ENCODE measurements at regions of chr17 and their contacts with region 1.

Region 1: DNA sequence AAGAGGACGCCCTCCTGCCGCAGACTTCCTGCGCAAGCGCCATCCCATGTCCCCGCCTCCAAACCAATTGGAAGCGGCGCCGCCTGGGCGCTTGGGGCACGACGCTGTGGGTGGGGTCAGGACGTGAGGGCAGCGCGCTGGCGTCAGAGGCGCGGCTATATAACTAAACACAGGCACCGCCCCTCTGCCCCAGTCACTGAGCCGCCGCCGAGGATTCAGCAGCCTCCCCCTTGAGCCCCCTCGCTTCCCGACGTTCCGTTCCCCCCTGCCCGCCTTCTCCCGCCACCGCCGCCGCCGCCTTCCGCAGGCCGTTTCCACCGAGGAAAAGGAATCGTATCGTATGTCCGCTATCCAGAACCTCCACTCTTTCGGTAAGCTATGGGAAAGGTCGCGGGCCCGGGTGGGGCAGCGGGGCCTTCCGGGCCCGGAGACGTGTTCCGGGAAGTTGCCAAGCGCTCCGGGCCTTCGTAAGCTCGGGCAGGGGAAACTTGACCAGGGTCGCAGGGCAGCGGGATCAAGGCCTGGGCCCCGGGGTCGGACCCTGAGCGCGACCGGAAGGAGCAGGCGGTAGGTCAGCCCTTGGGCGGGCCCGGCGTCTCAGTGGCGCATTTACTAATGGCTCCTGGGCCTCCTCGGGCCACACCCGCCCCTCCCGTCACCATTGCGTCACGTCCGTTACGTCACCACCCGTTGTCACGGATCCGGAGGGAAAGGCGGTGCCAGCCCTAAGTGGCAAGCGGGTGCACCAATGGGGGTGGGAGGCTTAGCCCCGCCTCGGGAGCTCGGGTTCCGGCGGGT is at the start of gene EIF1:
- DNase-seq: peak; percentile 100
- ATAC-seq: peak; percentile 81
- H3K4me3 Mint-ChIP-seq: peak within 1 kb of the TSS; percentile 97
- H3K27ac Mint-ChIP-seq: peak within 1 kb of the TSS; percentile 95
- H3K4me1 Mint-ChIP-seq: peaks cover 20% of the 10 kb centered on the region
- H3K27me3 Mint-ChIP-seq: no peaks in the 10 kb centered on the region
- total RNA-seq, gene EIF1: 869 to 977 TPM

Region 2: DNA sequence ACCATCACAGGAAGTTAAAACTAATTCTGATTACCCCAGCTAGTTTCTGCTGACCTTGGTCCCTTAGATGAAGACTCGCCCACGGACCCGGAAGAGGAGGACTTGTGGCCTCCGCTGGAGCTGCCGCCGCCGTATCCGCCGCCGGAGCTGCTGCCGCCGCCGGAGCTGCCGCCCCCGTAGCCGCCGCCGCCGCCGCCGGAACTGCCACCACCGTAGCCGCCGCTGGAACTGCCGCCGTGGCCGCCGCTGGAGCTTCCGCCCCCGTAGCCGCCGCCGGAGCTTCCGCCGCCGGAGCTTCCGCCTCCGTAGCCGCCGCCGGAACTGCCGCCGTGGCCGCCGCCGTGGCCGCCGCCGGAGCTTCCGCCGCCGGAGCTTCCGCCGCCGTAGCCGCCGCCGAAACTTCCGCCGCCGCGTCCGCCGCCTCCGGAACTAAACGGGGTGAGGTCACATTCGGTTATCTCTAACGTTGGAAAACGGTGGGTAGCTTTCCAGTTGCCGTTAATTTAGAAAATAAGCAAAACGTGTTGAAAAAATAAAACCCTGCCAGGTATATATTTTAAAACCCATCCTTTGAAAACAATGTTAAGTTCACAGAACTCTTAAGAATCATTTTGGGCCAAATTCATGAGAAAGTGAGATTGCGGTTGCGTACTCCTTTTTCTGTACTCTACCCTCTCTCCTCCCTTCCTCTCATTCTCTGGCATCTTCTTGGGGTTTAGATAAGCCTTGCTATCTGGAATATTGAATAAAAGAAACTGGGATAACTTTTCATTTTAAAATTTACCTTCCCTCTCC is 870.0 kb before region 1 on chr17:
- CTCF ChIA-PET with region 1: no interaction called
- POLR2A ChIA-PET with region 1: interaction called, 7 read pairs
- intact Hi-C with region 1: loop called in 1 of 2 experiments (anchors 2 kb)
- DNase-seq: peak; percentile 91
- ATAC-seq: peak; percentile 84
- H3K4me3 Mint-ChIP-seq: peak overlapping the region; percentile 95
- H3K27ac Mint-ChIP-seq: peak overlapping the region; percentile 97
- H3K4me1 Mint-ChIP-seq: peaks cover 25% of the 10 kb centered on the region
- H3K27me3 Mint-ChIP-seq: peaks cover 1% of the 10 kb centered on the region

Region 3: GRCh38 chr17:41360296-41360995 is 328.5 kb before region 1 on chr17:
- CTCF ChIA-PET with region 1: no interaction called
- POLR2A ChIA-PET with region 1: no interaction called
- intact Hi-C with region 1: no loop called
- DNase-seq: no peak
- ATAC-seq: no peak
- H3K4me3 Mint-ChIP-seq: no peak overlapping the region
- H3K27ac Mint-ChIP-seq: no peak overlapping the region
- H3K4me1 Mint-ChIP-seq: no peaks in the 10 kb centered on the region
- H3K27me3 Mint-ChIP-seq: no peaks in the 10 kb centered on the region

Region 4: DNA sequence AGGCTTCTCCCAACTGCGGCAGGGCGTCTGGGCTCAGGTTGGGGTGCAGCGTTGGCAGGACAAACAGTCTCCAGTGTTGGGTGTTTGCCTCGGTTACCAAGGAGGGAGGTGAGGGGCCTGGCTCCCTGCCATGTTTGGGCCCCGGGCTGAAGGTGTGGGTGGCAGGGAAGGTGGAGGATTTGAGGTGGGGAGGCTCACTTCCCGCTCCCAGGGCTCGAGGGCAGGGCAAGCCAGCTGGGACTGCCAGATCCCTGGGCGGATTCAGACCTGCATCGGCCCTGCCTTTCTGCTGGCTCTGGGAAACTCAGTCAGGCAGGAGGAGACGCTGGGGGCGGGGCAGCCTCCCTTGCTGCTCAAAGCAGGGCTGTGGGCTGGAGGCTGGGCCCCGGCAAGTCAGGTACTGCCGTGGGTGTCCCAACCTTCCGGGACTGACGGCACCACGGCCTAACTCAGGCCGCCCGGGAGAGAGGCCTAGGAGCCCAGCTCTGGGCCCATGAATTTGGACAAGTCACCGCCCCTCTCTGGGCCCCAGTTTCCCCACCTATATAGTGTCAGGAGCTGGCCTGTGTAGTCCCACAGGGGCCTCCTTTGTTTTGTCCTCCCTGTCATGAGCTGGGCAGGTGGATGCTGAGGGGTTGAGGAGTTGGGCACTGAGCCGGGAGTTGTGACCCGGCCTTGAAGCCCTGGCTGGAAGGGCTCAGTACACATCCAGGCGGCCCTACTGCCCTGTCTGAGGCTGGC is 33.1 kb before region 1 on chr17:
- CTCF ChIA-PET with region 1: no interaction called
- POLR2A ChIA-PET with region 1: no interaction called
- intact Hi-C with region 1: no loop called
- DNase-seq: no peak
- ATAC-seq: no peak
- H3K4me3 Mint-ChIP-seq: no peak overlapping the region
- H3K27ac Mint-ChIP-seq: no peak overlapping the region
- H3K4me1 Mint-ChIP-seq: no peaks in the 10 kb centered on the region
- H3K27me3 Mint-ChIP-seq: no peaks in the 10 kb centered on the region

Region 5: DNA sequence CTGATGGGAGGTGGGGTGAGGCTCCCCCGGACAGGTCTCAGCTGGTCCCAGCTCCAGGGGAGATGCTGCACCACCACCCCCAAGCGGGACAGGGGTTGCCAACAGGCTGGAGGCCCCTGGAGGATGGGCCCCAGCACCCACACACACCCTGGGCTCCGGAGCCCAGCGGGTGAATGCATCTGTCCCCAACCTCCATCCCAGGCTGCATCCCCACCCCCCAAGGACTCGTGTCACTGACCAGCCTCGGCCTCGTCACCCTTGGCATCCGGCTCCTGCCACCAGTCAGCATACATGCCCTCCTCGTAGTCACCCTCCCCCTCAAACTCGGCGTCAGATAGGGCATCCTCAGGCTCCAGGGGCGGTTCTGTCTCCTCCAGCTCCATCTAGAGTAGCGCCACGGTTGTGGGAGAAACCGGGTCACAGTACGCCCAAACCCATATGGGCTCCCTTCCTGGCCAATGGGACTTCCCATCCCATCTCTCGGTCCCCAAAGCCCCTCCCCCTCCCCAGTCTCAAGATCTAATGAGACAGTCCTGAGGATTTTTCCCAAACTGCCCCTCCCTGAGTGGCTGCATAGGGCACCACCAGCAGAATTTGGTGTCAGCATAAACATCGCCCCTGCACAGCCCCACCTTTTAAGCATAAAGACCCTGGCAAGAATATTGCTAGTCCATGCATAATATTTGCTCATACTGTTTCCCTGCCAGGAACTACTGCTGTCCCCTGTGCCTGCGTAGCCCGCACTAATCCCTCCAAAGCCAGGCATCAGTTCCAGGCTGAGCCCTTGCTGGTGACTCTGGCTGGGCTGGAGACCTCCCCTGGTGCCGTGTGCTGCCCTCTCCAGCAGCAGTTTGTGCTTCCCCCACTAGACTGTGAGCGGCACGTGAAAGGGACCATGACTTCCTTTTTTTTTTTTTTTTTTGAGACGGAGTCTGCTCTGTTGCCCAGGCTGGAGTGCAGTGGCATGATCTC is 114.4 kb after region 1 on chr17:
- CTCF ChIA-PET with region 1: no interaction called
- POLR2A ChIA-PET with region 1: no interaction called
- intact Hi-C with region 1: no loop called
- DNase-seq: no peak
- ATAC-seq: no peak
- H3K4me3 Mint-ChIP-seq: no peak overlapping the region
- H3K27ac Mint-ChIP-seq: no peak overlapping the region
- H3K4me1 Mint-ChIP-seq: peaks cover 4% of the 10 kb centered on the region
- H3K27me3 Mint-ChIP-seq: no peaks in the 10 kb centered on the region

Region 6: DNA sequence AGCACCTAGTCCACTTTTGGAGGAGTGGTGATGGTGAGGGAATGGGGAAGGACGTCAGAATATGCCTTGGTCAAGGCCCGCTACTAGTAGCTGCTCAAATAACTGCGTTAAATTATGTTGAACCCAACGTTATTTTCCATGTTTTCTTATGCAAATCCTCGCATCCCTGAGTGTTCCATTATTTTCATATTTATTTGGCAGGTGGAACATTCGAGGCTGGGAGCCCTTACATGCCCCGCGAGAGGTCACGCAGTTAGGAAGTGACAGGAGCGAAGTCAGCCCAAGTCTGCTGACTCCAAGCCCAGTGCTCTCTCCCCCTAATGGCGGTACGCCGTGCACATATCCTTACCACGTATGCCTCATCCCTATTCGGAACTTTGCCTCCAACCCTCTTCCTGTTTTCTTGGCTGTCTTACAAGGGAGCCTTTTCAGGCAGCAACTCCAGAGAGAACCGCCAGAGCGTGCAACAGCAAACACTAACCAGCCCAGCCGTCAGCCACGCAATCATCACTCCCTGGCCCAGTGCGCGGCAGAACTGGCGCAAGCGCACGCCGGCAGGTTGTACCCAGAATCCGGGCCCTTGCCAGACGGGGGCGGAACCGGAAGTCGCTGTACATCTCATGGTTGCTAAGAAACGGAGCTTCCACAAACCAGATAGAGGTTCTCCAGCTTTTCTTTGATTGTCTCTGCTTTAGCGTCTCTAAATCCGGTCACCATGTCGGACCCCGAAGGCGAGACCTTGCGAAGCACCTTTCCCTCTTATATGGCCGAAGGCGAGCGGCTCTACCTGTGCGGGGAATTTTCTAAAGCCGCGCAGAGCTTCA is 241.3 kb after region 1 on chr17 and contains the start of gene ODAD4:
- CTCF ChIA-PET with region 1: interaction called, 3 read pairs
- POLR2A ChIA-PET with region 1: no interaction called
- intact Hi-C with region 1: loop called in 1 of 2 experiments (anchors 1 kb)
- DNase-seq: peak; percentile 98
- ATAC-seq: peak; percentile 99
- H3K4me3 Mint-ChIP-seq: peak within 1 kb of the TSS; percentile 96
- H3K27ac Mint-ChIP-seq: peak within 1 kb of the TSS; percentile 98
- H3K4me1 Mint-ChIP-seq: peaks cover 21% of the 10 kb centered on the region
- H3K27me3 Mint-ChIP-seq: no peaks in the 10 kb centered on the region
- total RNA-seq, gene ODAD4: 0.81 to 1.1 TPM

Measured in activated CD4-positive, alpha-beta T cell treated with anti-CD3 and anti-CD28 coated beads for 36 hours (primary cell).